ENCODE measurements at regions of chr3 and their contacts with region 1.

Region 1: DNA sequence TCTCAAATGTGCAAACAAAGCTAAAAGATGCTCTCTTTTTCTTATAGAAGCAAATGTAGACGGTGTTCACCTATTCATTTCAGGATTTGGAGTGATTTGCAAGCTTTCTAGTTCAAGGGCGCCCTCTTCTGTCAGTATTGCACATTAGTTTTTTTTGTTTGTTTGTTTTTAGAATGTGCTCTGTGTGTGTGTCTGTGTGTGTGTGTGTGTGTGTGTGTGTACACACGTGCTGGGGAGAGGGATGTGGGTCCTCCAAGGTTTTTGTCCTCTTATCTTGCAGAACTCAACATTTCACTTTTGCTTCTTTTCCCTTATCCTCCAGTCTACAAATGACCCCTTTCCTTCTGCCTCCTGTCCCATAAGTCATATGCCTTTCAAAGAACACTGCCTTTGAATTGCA is 23.5 kb downstream of the DNAH1 start:
- DNase-seq: peak in 5 of 7 donors; percentile 41 to 53 (median 49)
- H3K4me3 ChIP-seq: no peak overlapping the region
- H3K27ac ChIP-seq: no peak overlapping the region
- H3K4me1 ChIP-seq: no peaks in the 10 kb centered on the region
- H3K27me3 ChIP-seq: no peaks in the 10 kb centered on the region
- CTCF ChIP-seq: peak; percentile 46 to 98 (median 69)
- POLR2A ChIP-seq: no peak

Region 2: GRCh38 chr3:52231502-52232293 is 107.9 kb before region 1 on chr3:
- intact Hi-C with region 1: loop called in 1 of 2 experiments (anchors 5 kb)
- DNase-seq: peak; percentile 76 to 89 (median 80)
- H3K4me3 ChIP-seq: no peak overlapping the region
- H3K27ac ChIP-seq: no peak overlapping the region
- H3K4me1 ChIP-seq: peaks cover 7% of the 10 kb centered on the region in 2 donors
- H3K27me3 ChIP-seq: no peaks in the 10 kb centered on the region
- CTCF ChIP-seq: peak; percentile 84 to 94 (median 87)
- POLR2A ChIP-seq: no peak

Region 3: GRCh38 chr3:52291508-52292181 is 48.0 kb before region 1 on chr3:
- intact Hi-C with region 1: loop called in 1 of 2 experiments (anchors 2 kb)
- DNase-seq: peak in 3 of 7 donors; percentile 37 to 55 (median 45)
- H3K4me3 ChIP-seq: no peak overlapping the region
- H3K27ac ChIP-seq: no peak overlapping the region
- H3K4me1 ChIP-seq: peaks cover 4 to 17% of the 10 kb centered on the region in 2 donors
- H3K27me3 ChIP-seq: no peaks in the 10 kb centered on the region
- CTCF ChIP-seq: peak; percentile 12 to 59 (median 48)
- POLR2A ChIP-seq: no peak

Region 4: GRCh38 chr3:52670621-52671521 is 331.3 kb after region 1 on chr3:
- intact Hi-C with region 1: no loop called
- DNase-seq: peak; percentile 42 to 80 (median 68)
- H3K4me3 ChIP-seq: no peak overlapping the region
- H3K27ac ChIP-seq: peak overlapping the region in 4 of 5 donors; percentile 39 to 85 (median 65)
- H3K4me1 ChIP-seq: peaks cover 7 to 24% of the 10 kb centered on the region in 2 donors
- H3K27me3 ChIP-seq: no peaks in the 10 kb centered on the region
- CTCF ChIP-seq: no peak
- POLR2A ChIP-seq: peak in 1 of 2 donors; percentile 31

Measured in adrenal gland (tissue), 19 donors.